ENCODE measurements at regions of chr2 and their contacts with region 1.

Region 1: DNA sequence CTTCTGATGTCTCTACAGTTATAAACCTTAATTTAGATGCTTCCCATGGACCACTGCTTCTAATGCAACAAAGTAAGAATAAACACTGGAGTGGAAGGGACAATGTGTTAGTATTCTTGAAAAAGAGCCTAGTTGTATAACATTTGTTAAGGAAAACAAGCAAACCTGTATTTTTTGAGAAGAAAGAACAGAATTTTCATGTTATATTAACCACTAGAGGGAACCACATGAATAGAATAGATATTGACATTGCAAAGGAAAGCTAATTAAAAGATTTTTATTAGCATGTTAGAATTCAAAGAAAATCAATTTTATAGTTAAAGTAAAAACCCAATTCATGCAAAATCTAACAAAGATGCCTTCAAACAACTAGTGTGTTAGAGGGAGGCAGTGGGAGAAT is 151.2 kb upstream of the BARD1 start:
- DNase-seq: no peak
- ATAC-seq: peak; percentile 29; the same call in 1 of the 3 replicates
- H3K4me3 ChIP-seq: no peak overlapping the region
- H3K27ac ChIP-seq: no peak overlapping the region; the same call in 1 of the 2 replicates
- H3K4me1 ChIP-seq: no peaks in the 10 kb centered on the region
- H3K27me3 ChIP-seq: no peaks in the 10 kb centered on the region
- CTCF ChIP-seq: peak in 1 of 3 experiments; percentile 14; a peak in 2 of 6 replicates
- EP300 ChIP-seq: no peak
- POLR2A ChIP-seq: no peak
- RAD21 ChIP-seq: no peak

Region 2: GRCh38 chr2:214737188-214737587 is 223.5 kb before region 1 on chr2:
- CTCF ChIA-PET with region 1: no interaction called
- POLR2A ChIA-PET with region 1: no interaction called
- RAD21 ChIA-PET with region 1: no interaction called
- SMC1A ChIA-PET with region 1: no interaction called
- in situ Hi-C with region 1: no loop called
- intact Hi-C with region 1: no loop called
- DNase-seq: peak; percentile 92
- ATAC-seq: peak; percentile 88
- H3K4me3 ChIP-seq: no peak overlapping the region
- H3K27ac ChIP-seq: peak overlapping the region; percentile 89
- H3K4me1 ChIP-seq: peaks cover 12% of the 10 kb centered on the region
- H3K27me3 ChIP-seq: no peaks in the 10 kb centered on the region
- CTCF ChIP-seq: no peak
- EP300 ChIP-seq: peak; percentile 97 to 98; a peak in 3 of 4 replicates
- POLR2A ChIP-seq: no peak
- RAD21 ChIP-seq: no peak

Region 3: DNA sequence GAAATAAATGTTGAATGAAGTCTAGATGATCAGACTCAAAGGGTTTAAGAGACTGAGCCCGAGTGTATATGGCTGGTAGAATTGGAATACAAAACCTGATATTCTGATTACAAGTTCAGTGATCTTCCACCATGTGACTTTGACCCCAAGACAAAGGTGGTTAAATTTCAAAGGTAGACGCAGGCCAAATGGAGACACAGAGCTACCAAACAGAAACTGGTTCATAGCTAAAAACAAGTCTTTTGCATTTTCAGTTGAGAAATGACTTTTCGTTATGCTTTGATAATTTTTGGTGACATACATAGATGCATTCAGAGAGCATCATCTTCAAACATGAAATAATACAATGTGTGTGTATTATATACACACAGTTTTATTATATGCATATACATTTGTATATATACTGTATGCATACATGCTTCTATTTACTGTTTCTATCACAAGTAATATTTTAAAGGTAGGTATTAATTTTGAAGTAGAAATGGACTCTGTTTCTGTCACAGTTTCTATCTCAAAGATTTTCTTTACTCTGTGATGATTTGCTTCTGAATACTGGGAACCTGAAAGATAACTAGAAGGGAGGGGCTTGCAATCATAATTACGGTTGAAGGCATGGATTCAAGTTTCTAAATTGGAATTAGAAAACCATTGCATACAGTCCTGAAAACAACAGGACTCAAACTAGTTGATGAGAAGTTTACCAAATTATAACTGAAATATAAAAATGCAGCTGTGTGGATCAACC is 35.4 kb after region 1 on chr2:
- CTCF ChIA-PET with region 1: interaction called, 15 read pairs
- POLR2A ChIA-PET with region 1: no interaction called
- RAD21 ChIA-PET with region 1: interaction called, 8 read pairs
- SMC1A ChIA-PET with region 1: interaction called, 11 read pairs
- in situ Hi-C with region 1: no loop called
- intact Hi-C with region 1: no loop called
- DNase-seq: peak; percentile 85
- ATAC-seq: peak; percentile 96
- H3K4me3 ChIP-seq: 0 out of 2 replicates have a peak overlapping the region, but pooled peaks have one; percentile 21
- H3K27ac ChIP-seq: peak overlapping the region; percentile 89
- H3K4me1 ChIP-seq: peaks cover 20% of the 10 kb centered on the region
- H3K27me3 ChIP-seq: no peaks in the 10 kb centered on the region
- CTCF ChIP-seq: no peak
- EP300 ChIP-seq: peak; percentile 70 to 82; a peak in 2 of 4 replicates
- POLR2A ChIP-seq: no peak
- RAD21 ChIP-seq: no peak

Region 4: GRCh38 chr2:215002500-215002899 is 41.8 kb after region 1 on chr2:
- CTCF ChIA-PET with region 1: interaction called, 15 read pairs
- POLR2A ChIA-PET with region 1: no interaction called
- RAD21 ChIA-PET with region 1: interaction called, 7 read pairs
- SMC1A ChIA-PET with region 1: interaction called, 10 read pairs
- in situ Hi-C with region 1: no loop called
- intact Hi-C with region 1: no loop called
- DNase-seq: no peak
- ATAC-seq: peak; percentile 84
- H3K4me3 ChIP-seq: no peak overlapping the region
- H3K27ac ChIP-seq: no peak overlapping the region
- H3K4me1 ChIP-seq: no peaks in the 10 kb centered on the region
- H3K27me3 ChIP-seq: no peaks in the 10 kb centered on the region
- CTCF ChIP-seq: peak; percentile 39 to 71 (median 43); a peak in 5 of 6 replicates
- EP300 ChIP-seq: no peak
- POLR2A ChIP-seq: no peak
- RAD21 ChIP-seq: peak; percentile 55

Region 5: DNA sequence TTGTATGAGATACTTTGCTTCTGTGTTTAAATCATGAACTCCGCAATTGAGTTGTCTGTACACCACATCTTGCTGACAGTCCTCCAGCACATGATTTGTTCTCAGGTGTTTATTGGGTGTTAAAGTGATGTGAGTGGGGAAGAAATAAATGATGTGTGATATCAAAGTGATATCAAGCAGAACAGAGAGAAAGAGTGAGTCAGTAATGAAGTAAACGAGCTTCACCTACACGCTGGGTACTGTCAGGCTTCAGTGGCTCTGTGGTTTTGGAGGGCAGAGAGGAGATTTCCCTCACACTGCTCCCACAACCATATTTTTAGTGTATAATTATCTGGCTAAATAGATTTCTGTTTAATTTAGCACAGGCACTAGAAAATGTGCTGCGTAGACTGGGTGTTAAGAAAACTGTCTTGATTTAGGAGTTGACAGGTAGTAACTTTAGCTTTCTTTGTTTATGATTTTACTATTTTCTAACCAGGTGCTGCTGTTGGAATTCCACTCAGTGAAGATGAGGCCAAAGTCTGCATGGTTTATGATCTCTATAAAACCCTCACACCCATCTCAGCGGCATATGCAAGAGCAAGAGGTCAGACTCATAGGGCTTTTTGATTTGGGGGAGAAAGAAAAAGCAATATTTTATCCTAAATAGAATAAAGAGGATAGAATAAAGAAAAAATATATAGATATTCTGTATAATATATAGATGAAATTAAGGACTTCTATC is 372.4 kb after region 1 on chr2:
- CTCF ChIA-PET with region 1: no interaction called
- POLR2A ChIA-PET with region 1: no interaction called
- RAD21 ChIA-PET with region 1: no interaction called
- SMC1A ChIA-PET with region 1: no interaction called
- in situ Hi-C with region 1: no loop called
- intact Hi-C with region 1: loop called (anchors 5 kb)
- DNase-seq: peak; percentile 20
- ATAC-seq: peak; percentile 96
- H3K4me3 ChIP-seq: no peak overlapping the region
- H3K27ac ChIP-seq: no peak overlapping the region
- H3K4me1 ChIP-seq: peaks cover 8% of the 10 kb centered on the region; the same call in 1 of the 2 replicates
- H3K27me3 ChIP-seq: no peaks in the 10 kb centered on the region
- CTCF ChIP-seq: no peak
- EP300 ChIP-seq: no peak
- POLR2A ChIP-seq: no peak
- RAD21 ChIP-seq: no peak

Measured in GM12878 (cell line).